ENCODE measurements at regions of chr3 and their contacts with region 1.

Region 1: DNA sequence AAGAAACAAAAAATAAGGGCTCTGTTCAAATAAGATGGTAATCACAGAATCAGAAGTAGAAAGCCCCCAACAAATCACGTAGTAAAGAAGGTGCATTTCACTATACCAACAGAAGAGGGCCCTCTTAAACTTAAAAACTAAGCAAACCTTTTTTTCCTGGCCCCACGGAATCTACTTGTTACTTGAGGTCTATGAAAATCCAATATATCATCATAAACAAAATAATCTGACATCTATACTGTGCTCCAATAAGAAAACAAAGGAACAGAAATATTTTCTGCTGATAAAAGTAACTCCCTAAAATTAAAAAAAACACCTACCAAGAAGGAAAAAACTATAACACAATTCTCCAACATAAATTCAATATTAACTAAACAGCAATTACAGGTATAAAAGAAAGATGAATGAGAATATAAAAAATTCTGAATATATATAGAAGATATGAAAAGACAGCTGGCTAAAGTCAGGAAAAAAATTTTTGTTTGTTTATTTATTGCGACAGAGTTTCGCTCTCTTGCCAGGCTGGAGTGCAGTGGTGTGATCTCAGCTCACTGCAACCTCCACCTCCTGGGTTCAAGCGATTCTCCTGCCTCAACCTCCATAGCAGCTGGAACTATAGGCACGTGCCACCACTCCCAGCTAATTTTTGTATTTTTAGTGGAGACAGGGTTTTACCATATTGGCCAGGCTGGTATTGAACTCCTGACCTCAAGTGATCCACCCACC is 81.8 kb downstream of the CLASP2 start:
- DNase-seq: peak; percentile 9 to 31 (median 22)
- H3K4me3 ChIP-seq: no peak overlapping the region
- H3K4me3 Mint-ChIP-seq: no peak overlapping the region
- H3K27ac ChIP-seq: no peak overlapping the region
- H3K27ac Mint-ChIP-seq: no peak overlapping the region
- H3K4me1 ChIP-seq: no peaks in the 10 kb centered on the region
- H3K4me1 Mint-ChIP-seq: no peaks in the 10 kb centered on the region
- H3K27me3 ChIP-seq: no peaks in the 10 kb centered on the region
- H3K27me3 Mint-ChIP-seq: no peaks in the 10 kb centered on the region

Region 2: DNA sequence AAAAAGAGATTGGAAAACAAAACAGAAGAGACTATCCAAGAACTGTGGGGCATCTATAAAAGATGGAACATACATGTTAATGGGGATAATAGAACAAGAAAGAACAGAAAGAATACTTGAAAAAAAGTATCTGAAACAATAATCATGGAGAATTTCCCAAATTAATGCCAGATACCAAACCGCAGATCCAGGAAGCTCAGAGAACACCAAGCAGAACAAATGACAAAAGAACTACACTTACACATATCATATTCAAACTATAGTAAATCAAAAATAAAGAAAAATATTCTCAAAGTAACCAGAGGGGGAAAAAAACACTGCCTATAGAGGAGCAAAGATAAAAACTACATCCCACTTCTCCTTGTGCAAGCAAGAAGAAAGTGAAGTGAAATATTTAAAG is 41.8 kb after region 1 on chr3:
- CTCF ChIA-PET with region 1: no interaction called
- POLR2A ChIA-PET with region 1: no interaction called
- intact Hi-C with region 1: no loop called
- DNase-seq: no peak
- H3K4me3 ChIP-seq: no peak overlapping the region
- H3K4me3 Mint-ChIP-seq: no peak overlapping the region
- H3K27ac ChIP-seq: no peak overlapping the region
- H3K27ac Mint-ChIP-seq: peak overlapping the region in 1 of 7 donors; percentile 22
- H3K4me1 ChIP-seq: no peaks in the 10 kb centered on the region
- H3K4me1 Mint-ChIP-seq: peaks cover 0 to 4% (median under 1%) of the 10 kb centered on the region in 4 donors
- H3K27me3 ChIP-seq: no peaks in the 10 kb centered on the region
- H3K27me3 Mint-ChIP-seq: no peaks in the 10 kb centered on the region

Region 3: GRCh38 chr3:33717866-33718594 is 81.7 kb after region 1 on chr3 and contains the start of gene CLASP2:
- CTCF ChIA-PET with region 1: interaction called, 4 read pairs
- POLR2A ChIA-PET with region 1: no interaction called
- intact Hi-C with region 1: loop called (anchors 2 kb)
- DNase-seq: peak; percentile 86 to 89 (median 88)
- H3K4me3 ChIP-seq: peak within 1 kb of the TSS; percentile 53 to 88
- H3K4me3 Mint-ChIP-seq: peak within 1 kb of the TSS in 6 of 8 donors; percentile 92 to 99 (median 98)
- H3K27ac ChIP-seq: peak within 1 kb of the TSS; percentile 82
- H3K27ac Mint-ChIP-seq: peak within 1 kb of the TSS in 6 of 7 donors; percentile 96 to 99 (median 99)
- H3K4me1 ChIP-seq: peaks cover 27% of the 10 kb centered on the region
- H3K4me1 Mint-ChIP-seq: peaks cover 8 to 20% (median 13%) of the 10 kb centered on the region in 4 donors
- H3K27me3 ChIP-seq: no peaks in the 10 kb centered on the region
- H3K27me3 Mint-ChIP-seq: no peaks in the 10 kb centered on the region
- total RNA-seq, gene CLASP2: 62.1 to 63.0 TPM

Region 4: GRCh38 chr3:33758864-33759263 is 122.6 kb after region 1 on chr3:
- CTCF ChIA-PET with region 1: no interaction called
- POLR2A ChIA-PET with region 1: no interaction called
- intact Hi-C with region 1: no loop called
- DNase-seq: no peak
- H3K4me3 ChIP-seq: no peak overlapping the region
- H3K4me3 Mint-ChIP-seq: no peak overlapping the region
- H3K27ac ChIP-seq: no peak overlapping the region
- H3K27ac Mint-ChIP-seq: no peak overlapping the region
- H3K4me1 ChIP-seq: no peaks in the 10 kb centered on the region
- H3K4me1 Mint-ChIP-seq: no peaks in the 10 kb centered on the region
- H3K27me3 ChIP-seq: no peaks in the 10 kb centered on the region
- H3K27me3 Mint-ChIP-seq: peaks cover 0 to 2% of the 10 kb centered on the region in 2 donors